Endothelial cell of umbilical vein (primary cell): ENCODE measurements at regions of chr10 and their contacts with region 1.

Region 1: DNA sequence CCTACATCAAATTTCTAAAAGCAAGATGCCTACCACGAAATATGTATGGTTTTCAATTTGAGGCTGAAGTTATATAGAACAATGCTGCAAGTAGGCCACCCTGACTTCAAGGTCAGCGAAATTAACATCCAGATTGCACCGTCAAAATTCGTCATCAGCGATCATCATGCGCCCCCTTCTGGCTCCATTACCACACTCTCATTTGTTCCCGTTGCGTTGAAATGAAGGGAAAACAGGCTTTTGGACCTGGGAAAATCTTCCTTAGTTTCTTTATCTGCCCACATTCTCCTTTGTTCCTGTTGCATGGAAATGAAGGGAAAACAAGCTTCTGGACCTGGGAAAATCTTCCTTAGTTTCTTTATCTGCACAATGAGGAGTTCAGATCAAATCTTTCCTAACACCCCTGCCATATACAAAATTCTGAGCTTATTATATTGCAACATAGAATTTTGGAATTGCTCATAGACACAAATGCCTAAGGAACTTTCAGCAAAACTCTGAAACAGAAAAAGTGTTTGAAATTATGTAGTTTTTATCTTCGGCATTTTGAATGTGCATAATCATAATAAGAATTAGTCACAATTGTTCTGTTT is 98.2 kb upstream of the PRKCQ start:
- DNase-seq: peak; percentile 55
- H3K4me3 ChIP-seq: no peak overlapping the region
- H3K27ac ChIP-seq: no peak overlapping the region
- H3K4me1 ChIP-seq: no peaks in the 10 kb centered on the region
- H3K27me3 ChIP-seq: peaks cover 5 to 11% of the 10 kb centered on the region in 2 experiments
- CTCF ChIP-seq: peak; percentile 71 to 77
- POLR2A ChIP-seq: no peak

Region 2: GRCh38 chr10:6445501-6446316 is 232.6 kb before region 1 on chr10:
- CTCF ChIA-PET with region 1: interaction called, 3 read pairs
- POLR2A ChIA-PET with region 1: no interaction called
- dilution Hi-C with region 1: no loop called
- intact Hi-C with region 1: loop called (anchors 2 kb)
- DNase-seq: peak; percentile 41
- H3K4me3 ChIP-seq: no peak overlapping the region
- H3K27ac ChIP-seq: no peak overlapping the region
- H3K4me1 ChIP-seq: no peaks in the 10 kb centered on the region
- H3K27me3 ChIP-seq: no peaks in the 10 kb centered on the region
- CTCF ChIP-seq: peak; percentile 41 to 47
- POLR2A ChIP-seq: no peak

Region 3: GRCh38 chr10:6786579-6787031 is 108.3 kb after region 1 on chr10:
- CTCF ChIA-PET with region 1: no interaction called
- POLR2A ChIA-PET with region 1: no interaction called
- dilution Hi-C with region 1: no loop called
- intact Hi-C with region 1: loop called (anchors 2 kb)
- DNase-seq: peak; percentile 76
- H3K4me3 ChIP-seq: no peak overlapping the region
- H3K27ac ChIP-seq: no peak overlapping the region
- H3K4me1 ChIP-seq: no peaks in the 10 kb centered on the region
- H3K27me3 ChIP-seq: peaks cover 3 to 10% of the 10 kb centered on the region in 2 experiments
- CTCF ChIP-seq: peak; percentile 35 to 46
- POLR2A ChIP-seq: no peak

Region 4: DNA sequence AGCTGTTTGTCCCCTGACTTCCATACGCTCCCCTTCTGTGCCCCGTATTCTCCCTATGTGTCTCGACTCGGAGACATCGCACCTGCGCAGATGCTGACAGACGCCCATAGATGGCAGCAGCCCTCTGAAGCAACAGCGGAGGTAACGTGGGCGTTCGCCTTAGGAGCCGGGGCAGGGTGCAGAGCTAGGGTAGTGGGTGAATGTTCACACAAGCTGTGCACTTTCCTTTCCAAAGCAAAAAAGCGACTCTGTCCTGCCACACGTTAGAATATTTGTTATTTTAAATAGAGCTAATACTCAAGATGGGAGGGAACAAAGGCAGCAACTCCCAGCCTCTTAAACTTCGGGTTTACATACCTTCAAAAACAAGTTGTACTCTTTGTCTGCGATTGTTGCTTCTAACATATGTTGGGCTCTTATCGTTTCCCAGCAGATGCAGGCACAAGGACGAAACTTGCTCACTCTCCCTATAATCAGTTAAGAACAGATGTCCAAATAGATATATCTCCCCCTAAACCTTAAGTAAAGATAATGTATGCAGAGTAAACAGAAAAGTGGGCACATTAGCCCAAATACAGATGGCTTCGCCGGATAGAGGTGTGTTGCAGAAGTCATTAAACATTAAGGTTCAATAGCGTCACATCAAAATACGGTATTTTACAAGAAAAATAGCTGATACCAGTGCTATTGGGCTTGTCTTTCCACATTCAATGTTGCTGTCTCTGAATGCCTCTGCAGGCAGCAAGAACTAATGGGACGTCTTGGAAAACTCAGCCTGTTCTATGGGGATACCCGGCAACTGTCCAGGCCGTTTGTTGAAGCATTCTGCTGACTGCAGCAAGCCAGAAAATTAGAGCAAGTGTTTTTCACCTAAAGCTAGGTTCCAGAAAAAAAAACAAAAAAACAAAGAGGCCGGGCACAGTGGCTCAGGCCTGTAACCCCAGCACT is 242.0 kb after region 1 on chr10:
- CTCF ChIA-PET with region 1: interaction called, 4 read pairs
- POLR2A ChIA-PET with region 1: no interaction called
- dilution Hi-C with region 1: no loop called
- intact Hi-C with region 1: loop called (anchors 5 kb)
- DNase-seq: peak; percentile 48
- H3K4me3 ChIP-seq: no peak overlapping the region
- H3K27ac ChIP-seq: no peak overlapping the region
- H3K4me1 ChIP-seq: peaks cover 5% of the 10 kb centered on the region
- H3K27me3 ChIP-seq: no peaks in the 10 kb centered on the region
- CTCF ChIP-seq: peak; percentile 46 to 70
- POLR2A ChIP-seq: no peak

Region 5: DNA sequence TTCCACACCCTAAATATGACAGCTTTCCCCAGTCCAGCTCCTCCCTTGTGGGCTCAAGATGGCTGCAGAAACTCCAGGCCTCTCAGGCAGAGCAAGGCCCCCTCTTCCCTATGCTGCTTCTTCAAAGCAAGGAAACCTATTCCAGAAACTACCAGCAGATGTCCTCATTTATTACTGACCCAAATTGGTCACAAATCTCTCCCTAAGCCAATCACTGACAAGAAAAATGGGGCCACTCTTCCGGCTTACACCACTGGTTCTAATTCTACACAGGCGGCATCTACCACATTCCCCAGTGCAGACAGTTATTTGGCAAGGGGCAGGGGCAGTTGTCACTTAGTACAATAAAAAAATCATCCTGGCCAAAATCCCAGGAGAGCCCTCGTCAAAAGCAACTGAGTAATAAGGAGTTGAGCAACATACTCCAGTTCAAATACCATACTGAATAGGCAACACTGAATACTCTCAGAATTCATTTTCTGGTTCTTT is 582.1 kb after region 1 on chr10:
- CTCF ChIA-PET with region 1: no interaction called
- POLR2A ChIA-PET with region 1: no interaction called
- dilution Hi-C with region 1: no loop called
- intact Hi-C with region 1: loop called (anchors 5 kb)
- DNase-seq: peak; percentile 64
- H3K4me3 ChIP-seq: no peak overlapping the region
- H3K27ac ChIP-seq: no peak overlapping the region
- H3K4me1 ChIP-seq: peaks cover 10% of the 10 kb centered on the region
- H3K27me3 ChIP-seq: no peaks in the 10 kb centered on the region
- CTCF ChIP-seq: peak; percentile 46 to 57
- POLR2A ChIP-seq: no peak